ENCODE measurements at regions of chr19 and their contacts with region 1.

Region 1: GRCh38 chr19:19627621-19628500 is at the start of gene LPAR2:
- DNase-seq: peak; percentile 76 to 90 (median 83)
- H3K4me3 ChIP-seq: peak within 1 kb of the TSS; percentile 80
- H3K4me3 Mint-ChIP-seq: peak within 1 kb of the TSS; percentile 89 to 96 (median 94)
- H3K27ac ChIP-seq: peak within 1 kb of the TSS; percentile 61
- H3K27ac Mint-ChIP-seq: peak within 1 kb of the TSS; percentile 87 to 97 (median 96)
- H3K4me1 ChIP-seq: peaks cover 17% of the 10 kb centered on the region
- H3K4me1 Mint-ChIP-seq: peaks cover 23 to 39% (median 32%) of the 10 kb centered on the region in 3 donors
- H3K27me3 ChIP-seq: no peaks in the 10 kb centered on the region
- H3K27me3 Mint-ChIP-seq: no peaks in the 10 kb centered on the region
- total RNA-seq, gene LPAR2: 23.6 to 24.8 TPM

Region 2: GRCh38 chr19:19597809-19598306 is 30.0 kb before region 1 on chr19:
- CTCF ChIA-PET with region 1: interaction called, 4 read pairs
- POLR2A ChIA-PET with region 1: interaction called, 11 read pairs
- DNase-seq: peak; percentile 26 to 88 (median 79)
- H3K4me3 ChIP-seq: peak overlapping the region; percentile 2
- H3K4me3 Mint-ChIP-seq: peak overlapping the region; percentile 19 to 88 (median 78)
- H3K27ac ChIP-seq: peak overlapping the region; percentile 69
- H3K27ac Mint-ChIP-seq: peak overlapping the region; percentile 94 to 99 (median 98)
- H3K4me1 ChIP-seq: peaks cover 64% of the 10 kb centered on the region
- H3K4me1 Mint-ChIP-seq: peaks cover 56 to 77% (median 61%) of the 10 kb centered on the region in 3 donors
- H3K27me3 ChIP-seq: no peaks in the 10 kb centered on the region
- H3K27me3 Mint-ChIP-seq: peaks cover 0 to 6% of the 10 kb centered on the region in 2 donors

Region 3: DNA sequence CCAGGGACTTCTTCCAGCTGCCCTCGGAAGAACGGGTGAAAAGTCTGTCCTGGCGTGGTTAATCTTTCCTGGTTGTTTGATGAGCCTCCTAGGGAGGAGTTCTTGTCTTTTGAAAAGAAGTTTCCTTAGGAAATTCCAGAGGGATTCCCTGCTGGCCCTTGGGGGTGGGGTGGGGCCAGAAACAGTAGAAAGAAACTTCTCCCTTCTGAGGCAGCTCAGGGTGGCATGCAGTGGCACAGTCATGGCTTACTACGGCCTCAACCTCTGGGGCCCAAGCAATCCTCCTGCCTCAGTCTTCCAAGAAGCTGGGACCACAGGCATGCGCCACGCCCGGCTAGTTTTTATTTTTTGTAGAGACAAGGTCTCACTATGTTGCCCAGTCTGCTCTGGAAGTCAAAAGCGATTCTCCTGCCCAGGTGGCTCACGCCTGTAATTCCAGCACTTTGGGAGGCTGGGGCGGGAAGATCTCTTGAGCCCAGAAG is 42.2 kb after region 1 on chr19:
- CTCF ChIA-PET with region 1: no interaction called
- POLR2A ChIA-PET with region 1: interaction called, 11 read pairs
- DNase-seq: peak in 1 of 5 donors; percentile 40
- H3K4me3 ChIP-seq: peak overlapping the region; percentile 76
- H3K4me3 Mint-ChIP-seq: peak overlapping the region; percentile 85 to 92 (median 89)
- H3K27ac ChIP-seq: peak overlapping the region; percentile 85
- H3K27ac Mint-ChIP-seq: peak overlapping the region; percentile 84 to 99 (median 90)
- H3K4me1 ChIP-seq: peaks cover 50% of the 10 kb centered on the region
- H3K4me1 Mint-ChIP-seq: peaks cover 26 to 68% (median 39%) of the 10 kb centered on the region in 3 donors
- H3K27me3 ChIP-seq: no peaks in the 10 kb centered on the region
- H3K27me3 Mint-ChIP-seq: no peaks in the 10 kb centered on the region

Region 4: GRCh38 chr19:19686580-19686979 is 58.7 kb after region 1 on chr19:
- CTCF ChIA-PET with region 1: no interaction called
- POLR2A ChIA-PET with region 1: no interaction called
- DNase-seq: no peak
- H3K4me3 ChIP-seq: no peak overlapping the region
- H3K4me3 Mint-ChIP-seq: no peak overlapping the region
- H3K27ac ChIP-seq: no peak overlapping the region
- H3K27ac Mint-ChIP-seq: peak overlapping the region in 3 of 8 donors; percentile 18 to 46 (median 21)
- H3K4me1 ChIP-seq: no peaks in the 10 kb centered on the region
- H3K4me1 Mint-ChIP-seq: peaks cover 6 to 9% (median 8%) of the 10 kb centered on the region in 3 donors
- H3K27me3 ChIP-seq: no peaks in the 10 kb centered on the region
- H3K27me3 Mint-ChIP-seq: no peaks in the 10 kb centered on the region

Measured in CD8-positive, alpha-beta memory T cell (primary cell).